Activated T-helper 1 cell treated with anti-CD3 and anti-CD28 coated beads, Interleukin-12 subunit alpha, Interleukin-12 subunit beta, Interleukin-2, Interleukin-4 antibody, amounts not matched to agents 30 ng/mL and 10 ng/mL and 1 ng/mL, durations not matched to agents 14 hours and 24 hours and 36 hours (primary cell): ENCODE measurements at regions of chr20 and their contacts with region 1.

Region 1: GRCh38 chr20:41003143-41003883 is 25.3 kb upstream of the TOP1 start:
- DNase-seq: peak; percentile 56
- H3K4me3 Mint-ChIP-seq: peak overlapping the region; percentile 66
- H3K27ac Mint-ChIP-seq: peak overlapping the region; percentile 94
- H3K4me1 Mint-ChIP-seq: peaks cover 42% of the 10 kb centered on the region
- H3K27me3 Mint-ChIP-seq: no peaks in the 10 kb centered on the region

Region 2: GRCh38 chr20:41072190-41072863 is 69.0 kb after region 1 on chr20:
- intact Hi-C with region 1: loop called (anchors 1 kb)
- DNase-seq: no peak
- H3K4me3 Mint-ChIP-seq: peak overlapping the region; percentile 35
- H3K27ac Mint-ChIP-seq: peak overlapping the region; percentile 74
- H3K4me1 Mint-ChIP-seq: peaks cover 78% of the 10 kb centered on the region
- H3K27me3 Mint-ChIP-seq: no peaks in the 10 kb centered on the region

Region 3: DNA sequence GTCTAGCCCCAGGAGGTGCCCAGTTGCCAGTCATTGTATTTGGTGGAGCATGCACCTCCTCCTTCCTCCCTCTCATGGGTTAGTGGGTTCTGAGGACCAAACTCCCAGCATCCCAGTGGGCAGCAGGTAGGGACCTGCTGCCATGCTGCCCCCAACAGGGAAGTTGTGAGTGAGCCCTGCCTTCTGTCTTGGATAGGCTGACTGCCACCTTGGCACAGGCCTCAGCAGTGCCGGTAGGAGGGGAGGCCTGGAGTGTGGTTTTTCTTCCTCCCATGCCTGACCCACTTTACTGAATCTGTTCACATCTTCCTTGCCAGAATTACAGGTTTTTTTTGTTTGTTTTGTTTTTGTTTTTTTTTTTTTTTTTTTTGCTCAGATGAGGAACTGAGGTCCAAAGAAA is 158.6 kb after region 1 on chr20:
- intact Hi-C with region 1: loop called (anchors 1 kb)
- DNase-seq: no peak
- H3K4me3 Mint-ChIP-seq: peak overlapping the region; percentile 24
- H3K27ac Mint-ChIP-seq: peak overlapping the region; percentile 80
- H3K4me1 Mint-ChIP-seq: peaks cover 59% of the 10 kb centered on the region
- H3K27me3 Mint-ChIP-seq: no peaks in the 10 kb centered on the region